ENCODE measurements at regions of chr5 and their contacts with region 1.

Region 1: GRCh38 chr5:54517174-54518092 is at the start of gene SNX18:
- DNase-seq: peak; percentile 93
- H3K4me3 ChIP-seq: peak within 1 kb of the TSS; percentile 82 to 92 (median 88)
- H3K27ac ChIP-seq: peak within 1 kb of the TSS; percentile 91 to 95 (median 95)
- H3K4me1 ChIP-seq: peaks cover 5 to 46% (median 21%) of the 10 kb centered on the region in 4 donors
- H3K27me3 ChIP-seq: no peaks in the 10 kb centered on the region
- CTCF ChIP-seq: peak; percentile 90 to 98 (median 94)
- EP300 ChIP-seq: no peak
- POLR2A ChIP-seq: peak; percentile 27
- total RNA-seq, gene SNX18: 18.0 to 35.4 (median 20.0) TPM

Region 2: GRCh38 chr5:54844905-54845566 is 327.6 kb after region 1 on chr5:
- in situ Hi-C with region 1: loop called (anchors 5 to 25 kb)
- intact Hi-C with region 1: loop called (anchors 1 kb)
- DNase-seq: no peak
- H3K4me3 ChIP-seq: peak overlapping the region in 1 of 4 donors; percentile 4
- H3K27ac ChIP-seq: no peak overlapping the region
- H3K4me1 ChIP-seq: peaks cover 0 to 6% (median 2%) of the 10 kb centered on the region in 4 donors
- H3K27me3 ChIP-seq: no peaks in the 10 kb centered on the region
- CTCF ChIP-seq: peak; percentile 59 to 65 (median 61)
- EP300 ChIP-seq: no peak
- POLR2A ChIP-seq: no peak

Region 3: GRCh38 chr5:54867310-54867944 is 350.0 kb after region 1 on chr5:
- in situ Hi-C with region 1: loop called in 1 of 4 experiments (anchors 25 kb)
- intact Hi-C with region 1: loop called (anchors 5 kb)
- DNase-seq: no peak
- H3K4me3 ChIP-seq: no peak overlapping the region
- H3K27ac ChIP-seq: no peak overlapping the region
- H3K4me1 ChIP-seq: no peaks in the 10 kb centered on the region
- H3K27me3 ChIP-seq: no peaks in the 10 kb centered on the region
- CTCF ChIP-seq: peak; percentile 65 to 74 (median 67)
- EP300 ChIP-seq: no peak
- POLR2A ChIP-seq: no peak

Region 4: DNA sequence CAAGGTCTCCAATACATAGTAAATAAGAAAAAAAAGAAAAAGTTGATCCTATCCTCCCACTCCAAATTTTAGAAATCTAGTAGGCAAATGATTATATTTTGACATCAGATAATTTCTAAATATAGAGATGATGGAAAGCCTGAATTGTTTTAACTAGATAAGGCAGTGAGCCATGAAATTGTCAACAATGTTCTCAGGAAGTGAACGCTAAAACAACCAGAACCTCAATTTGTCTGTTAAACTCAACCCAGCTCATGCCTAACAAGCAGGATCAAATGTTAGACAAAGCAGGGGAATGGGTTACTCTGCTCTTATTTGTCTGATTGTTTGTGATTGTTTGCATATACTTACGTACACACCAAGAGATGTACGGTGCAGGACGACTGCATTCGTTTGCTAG is 418.8 kb after region 1 on chr5:
- in situ Hi-C with region 1: no loop called
- intact Hi-C with region 1: no loop called
- DNase-seq: no peak
- H3K4me3 ChIP-seq: no peak overlapping the region
- H3K27ac ChIP-seq: no peak overlapping the region
- H3K4me1 ChIP-seq: no peaks in the 10 kb centered on the region
- H3K27me3 ChIP-seq: no peaks in the 10 kb centered on the region
- CTCF ChIP-seq: no peak
- EP300 ChIP-seq: no peak
- POLR2A ChIP-seq: no peak